GM13976 (cell line): ENCODE measurements at regions of chr1 and their contacts with region 1.

Region 1: DNA sequence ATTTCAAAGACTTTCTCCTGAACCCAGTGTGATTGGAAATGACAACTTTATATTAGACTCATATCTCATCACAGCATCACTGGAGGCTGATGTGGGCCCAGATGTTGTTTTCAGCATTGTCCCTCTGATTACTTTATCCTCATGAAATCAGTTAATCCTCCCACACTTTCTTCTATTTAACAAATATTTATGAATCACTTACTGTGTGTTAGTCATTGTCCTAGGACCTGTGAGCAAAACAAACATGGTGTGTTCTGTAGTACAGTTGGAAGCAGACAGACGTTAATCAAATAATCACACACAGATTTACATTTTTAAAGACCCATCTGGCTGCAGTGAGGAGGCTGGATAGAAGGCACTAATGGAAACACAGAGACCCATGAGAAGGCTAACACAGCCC is 383.7 kb downstream of the PRDM2 start:
- DNase-seq: no peak
- CTCF ChIP-seq: no peak

Region 2: GRCh38 chr1:13901039-13901438 is 182.7 kb before region 1 on chr1:
- in situ Hi-C with region 1: no loop called
- DNase-seq: no peak
- CTCF ChIP-seq: no peak

Region 3: GRCh38 chr1:14027099-14027498 is 56.6 kb before region 1 on chr1:
- in situ Hi-C with region 1: loop called (anchors 10 kb)
- DNase-seq: no peak
- CTCF ChIP-seq: no peak

Region 4: DNA sequence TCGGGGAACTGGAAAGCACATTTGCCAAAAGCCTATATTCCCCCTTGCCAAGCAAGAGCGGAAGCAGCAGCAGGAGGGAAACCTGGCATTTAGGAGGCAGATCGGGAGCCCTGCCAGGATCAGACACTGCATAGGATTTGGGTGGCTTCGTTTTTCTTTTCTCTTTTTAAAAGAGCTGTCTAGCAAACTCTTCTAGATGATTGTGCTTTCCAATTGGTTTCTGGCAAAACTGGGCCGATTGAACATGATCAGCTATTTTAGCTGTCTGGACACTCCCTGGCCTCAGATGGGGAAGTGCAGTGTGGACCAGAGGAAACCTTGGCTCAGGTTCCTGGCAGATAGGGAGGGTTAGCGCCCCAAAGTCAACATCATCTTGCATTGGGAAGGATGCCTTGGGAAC is 100.7 kb after region 1 on chr1:
- in situ Hi-C with region 1: no loop called
- DNase-seq: no peak
- CTCF ChIP-seq: no peak